Activated CD8-positive, alpha-beta T cell treated with anti-CD3 and anti-CD28 coated beads, Interleukin-2, amount 10 ng/mL, durations not matched to agents 7 days and 5 days (primary cell): ENCODE measurements at regions of chr19 and their contacts with region 1.

Region 1: DNA sequence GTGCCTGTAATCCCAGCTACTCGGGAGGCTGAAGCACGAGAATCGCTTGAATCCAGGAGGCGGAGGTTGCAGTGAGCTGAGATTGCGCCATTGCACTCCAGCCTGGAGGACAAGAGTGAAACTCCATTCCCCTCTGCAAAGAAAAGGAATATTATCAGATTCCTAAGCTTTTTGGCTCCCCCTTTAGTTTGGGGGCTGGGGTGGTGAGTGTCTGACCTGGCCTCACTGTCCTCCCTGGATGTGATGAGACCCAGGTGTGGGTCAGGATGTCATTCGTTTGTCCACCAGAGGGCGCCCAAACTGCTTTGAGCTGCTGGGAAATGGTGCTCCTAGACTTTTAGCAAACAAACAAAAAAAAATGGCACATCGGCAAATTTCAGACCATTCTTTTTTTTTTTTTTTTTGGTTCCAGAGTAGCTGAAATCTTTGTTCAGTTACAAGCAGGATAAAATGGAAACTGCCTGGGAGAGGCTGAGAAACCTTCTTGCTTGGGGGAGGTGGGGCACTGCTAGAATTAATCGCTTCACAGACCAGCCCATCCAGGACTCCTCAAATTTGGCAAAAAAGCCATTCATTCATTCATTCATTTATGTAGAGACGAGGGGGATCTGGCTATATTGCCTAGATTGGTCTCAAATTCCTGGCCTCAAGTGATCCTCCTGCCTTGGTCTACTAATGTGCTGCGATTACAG is 29.4 kb downstream of the SPC24 start:
- DNase-seq: peak; percentile 82
- ATAC-seq: peak; percentile 63
- H3K4me3 Mint-ChIP-seq: no peak overlapping the region
- H3K27ac Mint-ChIP-seq: no peak overlapping the region
- H3K4me1 Mint-ChIP-seq: peaks cover 2% of the 10 kb centered on the region
- H3K27me3 Mint-ChIP-seq: no peaks in the 10 kb centered on the region

Region 2: DNA sequence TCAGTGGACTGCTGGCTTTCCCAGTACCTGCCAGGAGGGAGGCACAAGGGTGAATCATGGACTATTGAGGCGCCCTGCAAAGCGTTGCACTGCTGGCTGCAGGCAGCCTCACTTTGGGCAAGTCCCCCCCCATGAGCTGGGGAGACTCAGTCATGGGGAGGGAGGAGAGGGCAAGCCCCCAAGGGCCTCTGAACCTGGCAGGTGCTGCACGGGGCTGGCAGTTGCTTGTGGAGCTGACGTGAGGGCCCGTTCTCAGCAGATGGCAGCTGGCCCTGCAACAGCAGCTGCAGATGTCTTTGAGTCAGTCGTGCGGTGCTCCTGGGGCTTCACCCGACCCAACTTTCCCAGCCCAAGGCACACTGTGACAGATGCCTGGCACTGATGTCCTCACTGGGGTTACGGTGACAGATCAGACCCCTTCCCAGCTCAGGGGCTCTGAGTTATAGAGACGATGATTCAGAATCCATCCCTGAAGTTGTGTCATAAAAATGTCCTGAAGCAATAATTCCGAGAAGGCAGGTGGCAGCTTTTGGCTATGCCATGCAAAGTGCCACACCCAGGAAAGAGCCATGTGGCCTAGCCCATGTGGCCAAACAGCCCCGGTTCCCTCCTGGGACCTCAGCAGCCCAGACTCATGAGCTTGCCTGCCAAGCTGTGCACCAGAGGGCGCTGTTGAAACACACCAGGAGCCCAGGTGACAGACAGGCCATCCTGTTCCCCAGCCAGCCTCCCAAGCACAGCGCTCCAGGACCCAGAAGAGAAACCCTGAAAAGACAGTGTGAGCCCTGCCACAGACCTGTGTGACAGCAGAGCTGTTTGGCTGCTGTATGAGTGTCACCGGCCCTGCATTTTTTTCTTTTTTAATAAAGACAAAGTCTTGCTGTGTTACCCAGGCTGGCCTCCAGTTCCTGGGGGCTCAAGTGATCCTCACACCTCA is 90.4 kb before region 1 on chr19:
- CTCF ChIA-PET with region 1: interaction called, 40 read pairs
- POLR2A ChIA-PET with region 1: no interaction called
- DNase-seq: peak; percentile 91
- ATAC-seq: peak; percentile 98
- H3K4me3 Mint-ChIP-seq: no peak overlapping the region
- H3K27ac Mint-ChIP-seq: peak overlapping the region; percentile 39
- H3K4me1 Mint-ChIP-seq: peaks cover 8% of the 10 kb centered on the region
- H3K27me3 Mint-ChIP-seq: no peaks in the 10 kb centered on the region

Region 3: GRCh38 chr19:11380653-11381534 is 254.8 kb after region 1 on chr19:
- CTCF ChIA-PET with region 1: no interaction called
- POLR2A ChIA-PET with region 1: no interaction called
- DNase-seq: peak; percentile 99
- ATAC-seq: peak; percentile 86
- H3K4me3 Mint-ChIP-seq: peak overlapping the region; percentile 84
- H3K27ac Mint-ChIP-seq: peak overlapping the region; percentile 98
- H3K4me1 Mint-ChIP-seq: peaks cover 54% of the 10 kb centered on the region
- H3K27me3 Mint-ChIP-seq: peaks cover 12% of the 10 kb centered on the region